ENCODE measurements at regions of chr11 and their contacts with region 1.

Region 1: GRCh38 chr11:67382276-67383136 is 9.1 kb upstream of the CLCF1 start:
- DNase-seq: peak; percentile 71 to 87 (median 85)
- H3K4me3 ChIP-seq: no peak overlapping the region
- H3K27ac ChIP-seq: no peak overlapping the region
- H3K4me1 ChIP-seq: no peaks in the 10 kb centered on the region
- H3K27me3 ChIP-seq: no peaks in the 10 kb centered on the region
- CTCF ChIP-seq: peak; percentile 95 to 98 (median 97)
- EP300 ChIP-seq: no peak
- POLR2A ChIP-seq: peak; percentile 40

Region 2: DNA sequence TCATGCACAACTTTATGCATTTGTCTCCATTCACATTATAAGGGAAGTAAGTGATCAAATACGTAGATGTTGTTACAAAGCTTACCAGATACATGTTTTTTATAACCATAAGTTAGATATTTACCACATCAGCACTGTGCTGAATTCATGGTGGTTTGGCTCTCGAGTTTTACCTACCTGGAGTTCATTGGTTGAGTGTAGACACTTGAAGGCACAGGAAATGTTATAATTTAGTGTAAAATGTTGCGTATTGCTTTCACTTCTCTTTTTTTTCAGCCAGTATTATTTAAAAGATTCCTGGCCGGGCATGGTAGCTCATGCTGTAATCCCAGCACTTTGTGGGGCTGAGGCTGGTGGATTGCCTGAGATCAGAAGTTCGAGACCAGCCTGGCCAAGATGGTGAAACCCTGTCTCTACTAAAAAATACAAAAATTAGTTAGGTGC is 169.3 kb before region 1 on chr11:
- intact Hi-C with region 1: no loop called
- DNase-seq: no peak
- H3K4me3 ChIP-seq: no peak overlapping the region
- H3K27ac ChIP-seq: no peak overlapping the region
- H3K4me1 ChIP-seq: no peaks in the 10 kb centered on the region
- H3K27me3 ChIP-seq: no peaks in the 10 kb centered on the region
- CTCF ChIP-seq: no peak
- EP300 ChIP-seq: no peak
- POLR2A ChIP-seq: no peak

Region 3: GRCh38 chr11:67265633-67266423 is 116.7 kb before region 1 on chr11:
- intact Hi-C with region 1: loop called in 1 of 4 experiments (anchors 5 kb)
- DNase-seq: peak; percentile 70 to 90 (median 82)
- H3K4me3 ChIP-seq: peak overlapping the region; percentile 16
- H3K27ac ChIP-seq: peak overlapping the region; percentile 67 to 72
- H3K4me1 ChIP-seq: peaks cover 25% of the 10 kb centered on the region
- H3K27me3 ChIP-seq: no peaks in the 10 kb centered on the region
- CTCF ChIP-seq: peak; percentile 59 to 93 (median 91)
- EP300 ChIP-seq: no peak
- POLR2A ChIP-seq: no peak

Region 4: DNA sequence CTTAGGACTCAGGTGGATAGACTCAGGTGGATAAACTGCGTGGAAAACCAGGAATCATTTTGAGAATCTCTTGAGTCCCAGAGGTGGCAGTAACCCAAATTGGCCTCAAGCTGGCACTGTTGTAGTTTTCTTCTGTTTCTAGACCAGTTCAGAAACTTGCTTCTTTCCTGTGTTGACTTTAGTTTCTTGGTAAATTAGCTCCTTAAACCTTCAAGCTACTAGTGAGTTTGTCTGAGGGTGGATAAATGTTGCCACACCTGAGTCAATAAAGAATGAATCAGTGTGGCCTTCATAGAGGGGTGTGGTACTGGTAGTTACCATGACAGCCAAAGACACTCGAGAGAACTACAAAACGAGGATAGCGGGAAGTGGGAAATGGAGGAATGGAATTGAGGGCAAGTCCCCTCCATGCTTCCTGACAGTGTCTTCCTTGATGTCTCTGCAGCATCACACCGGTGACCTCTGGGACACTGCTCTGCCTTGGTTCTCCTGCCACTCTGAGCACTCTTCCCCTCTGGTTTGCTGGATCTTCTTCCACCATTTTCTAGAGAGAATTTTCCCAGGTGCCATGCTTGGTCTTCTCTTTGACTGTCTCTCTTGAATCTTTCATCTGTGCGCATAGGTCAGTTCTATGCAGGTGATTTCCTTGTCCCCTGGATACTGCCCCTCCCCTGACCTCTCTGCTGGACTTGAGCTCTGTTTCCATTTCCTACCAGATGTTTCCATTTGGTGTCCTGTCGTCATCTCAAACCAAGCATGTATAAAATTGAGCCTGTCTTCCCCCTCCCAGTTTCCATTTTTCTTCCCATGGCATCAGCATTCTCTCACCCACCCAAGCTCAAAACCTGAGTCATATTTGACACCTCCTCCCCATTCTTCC is 36.3 kb before region 1 on chr11:
- intact Hi-C with region 1: loop called in 3 of 4 experiments (anchors 5 kb)
- DNase-seq: no peak
- H3K4me3 ChIP-seq: no peak overlapping the region
- H3K27ac ChIP-seq: no peak overlapping the region
- H3K4me1 ChIP-seq: peaks cover 3% of the 10 kb centered on the region
- H3K27me3 ChIP-seq: no peaks in the 10 kb centered on the region
- CTCF ChIP-seq: no peak
- EP300 ChIP-seq: no peak
- POLR2A ChIP-seq: no peak

Region 5: GRCh38 chr11:67353317-67354074 is 29.0 kb before region 1 on chr11 and contains the start of gene POLD4:
- intact Hi-C with region 1: loop called (anchors 1 to 5 kb)
- DNase-seq: peak; percentile 99
- H3K4me3 ChIP-seq: peak within 1 kb of the TSS; percentile 61
- H3K27ac ChIP-seq: peak within 1 kb of the TSS; percentile 96 to 98
- H3K4me1 ChIP-seq: peaks cover 22% of the 10 kb centered on the region
- H3K27me3 ChIP-seq: no peaks in the 10 kb centered on the region
- CTCF ChIP-seq: no peak
- EP300 ChIP-seq: peak; percentile 54
- POLR2A ChIP-seq: peak; percentile 83
- total RNA-seq, gene POLD4: 22.6 to 57.7 (median 47.2) TPM